Head of caudate nucleus (tissue), 42 donors: ENCODE measurements at regions of chr1 and their contacts with region 1.

Region 1: GRCh38 chr1:212062832-212063438 is 27.4 kb downstream of the DTL start:
- DNase-seq: peak in 3 of 42 donors; percentile 8 to 26 (median 14)

Region 2: DNA sequence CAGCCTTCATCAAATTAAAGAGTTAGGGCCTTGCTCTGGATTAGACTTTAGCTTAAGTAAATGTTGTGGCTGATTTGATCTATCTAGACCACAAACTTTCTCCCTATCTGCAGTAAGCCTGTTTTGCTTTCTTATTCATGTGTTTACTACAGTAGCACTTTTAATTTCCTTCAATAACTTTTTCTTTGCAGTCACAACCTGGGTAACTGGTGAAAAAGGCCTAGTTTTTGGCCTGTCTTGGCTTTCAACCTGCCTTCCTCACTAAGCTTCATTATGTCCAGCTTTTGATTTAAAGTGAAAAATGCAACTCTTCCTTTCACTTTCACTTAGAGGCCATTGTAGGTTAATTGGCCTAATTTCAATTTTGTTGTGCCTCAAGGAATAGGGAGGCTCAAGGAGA is 219.9 kb before region 1 on chr1:
- intact Hi-C with region 1: no loop called
- DNase-seq: no peak

Region 3: GRCh38 chr1:212368073-212368484 is 305.1 kb after region 1 on chr1:
- intact Hi-C with region 1: loop called (anchors 5 kb)
- DNase-seq: peak in 35 of 42 donors; percentile 15 to 81 (median 54)